ENCODE measurements at regions of chr19 and their contacts with region 1.

Region 1: GRCh38 chr19:4638828-4639530 is at the start of gene TNFAIP8L1:
- DNase-seq: peak; percentile 81 to 99
- H3K4me3 ChIP-seq: peak within 1 kb of the TSS; percentile 45 to 69 (median 58)
- H3K27ac ChIP-seq: peak within 1 kb of the TSS; percentile 35; the same call in 1 of the 2 replicates
- H3K4me1 ChIP-seq: peaks cover 0 to 10% (median 6%) of the 10 kb centered on the region in 4 experiments; a peak in 3 of 7 replicates
- H3K27me3 ChIP-seq: peaks cover 0 to 13% (median 10%) of the 10 kb centered on the region in 4 experiments; a peak in 5 of 7 replicates
- CTCF ChIP-seq: no peak
- EP300 ChIP-seq: no peak
- POLR2A ChIP-seq: peak in 1 of 2 experiments; percentile 56; a peak in 2 of 3 replicates
- RAD21 ChIP-seq: no peak
- total RNA-seq, gene TNFAIP8L1: 5.9 and 6.1 TPM in 2 replicates

Region 2: DNA sequence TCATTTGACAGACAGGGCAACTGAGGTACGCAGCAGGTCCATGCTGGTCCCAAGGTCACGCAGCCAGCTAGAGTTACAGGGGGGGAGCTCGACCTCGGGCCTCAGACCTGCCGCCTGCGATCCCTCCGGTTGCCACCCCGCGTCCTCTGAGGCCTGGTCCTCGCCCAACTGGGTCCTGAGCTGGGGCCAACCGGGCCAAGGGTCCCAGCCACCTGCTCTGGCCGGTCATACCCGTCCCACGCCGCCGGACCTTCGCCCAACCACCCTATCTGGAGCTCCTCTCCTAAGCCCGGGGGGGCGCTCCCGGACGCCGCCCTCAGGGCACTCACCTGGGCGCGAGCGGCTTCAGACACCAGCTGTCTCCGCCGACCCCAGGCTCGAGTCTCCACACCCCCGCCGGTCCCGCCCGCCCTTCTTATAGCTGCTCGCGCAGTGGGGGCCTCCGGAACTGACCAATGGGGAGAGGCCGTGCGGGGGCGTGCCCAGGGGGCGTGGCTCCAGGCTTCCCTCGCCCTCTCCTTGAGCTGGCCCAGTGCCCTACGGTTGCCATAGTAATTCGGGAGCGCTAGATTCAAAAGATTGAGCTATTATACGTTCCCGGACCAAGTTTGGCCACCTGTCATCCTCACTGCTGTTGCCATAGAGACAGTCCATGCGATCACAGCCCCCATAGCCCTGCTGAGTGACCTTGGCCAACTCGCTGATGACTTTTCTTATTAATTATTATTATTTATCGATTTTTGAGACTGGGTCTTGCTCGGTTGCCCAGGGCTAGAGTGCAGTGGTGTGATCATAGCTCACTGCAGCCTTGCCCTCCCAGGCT is 103.9 kb before region 1 on chr19 and contains the start of gene PLIN5:
- CTCF ChIA-PET with region 1: interaction called, 23 read pairs
- POLR2A ChIA-PET with region 1: interaction called, 8 read pairs
- DNase-seq: peak; percentile 54 to 99
- H3K4me3 ChIP-seq: peak within 1 kb of the TSS in 3 of 4 experiments; percentile 12 to 53 (median 16); a peak in 5 of 8 replicates
- H3K27ac ChIP-seq: no peak within 1 kb of the TSS
- H3K4me1 ChIP-seq: peaks cover 0 to 13% (median 5%) of the 10 kb centered on the region in 4 experiments; a peak in 5 of 7 replicates
- H3K27me3 ChIP-seq: peaks cover 0 to 19% (median 15%) of the 10 kb centered on the region in 4 experiments; a peak in 4 of 7 replicates
- CTCF ChIP-seq: peak in 2 of 3 experiments; percentile 0 to 8; a peak in 2 of 4 replicates
- EP300 ChIP-seq: no peak
- POLR2A ChIP-seq: peak in 1 of 2 experiments; percentile 86; a peak in 2 of 3 replicates
- RAD21 ChIP-seq: peak in 1 of 2 experiments; percentile 3; a peak in 1 of 4 replicates
- total RNA-seq, gene PLIN5: 1.8 and 2.0 TPM in 2 replicates

Region 3: GRCh38 chr19:4576016-4576933 is 62.7 kb before region 1 on chr19:
- CTCF ChIA-PET with region 1: interaction called, 316 read pairs
- POLR2A ChIA-PET with region 1: interaction called, 7 read pairs
- DNase-seq: peak in 1 of 2 experiments; percentile 96
- H3K4me3 ChIP-seq: 0 out of 8 replicates have a peak overlapping the region, but pooled peaks of 1 of the 4 experiments have one; percentile 36
- H3K27ac ChIP-seq: no peak overlapping the region
- H3K4me1 ChIP-seq: peaks cover 3 to 9% (median 7%) of the 10 kb centered on the region in 4 experiments
- H3K27me3 ChIP-seq: no peaks in the 10 kb centered on the region
- CTCF ChIP-seq: peak; percentile 79 to 94 (median 88)
- EP300 ChIP-seq: no peak
- POLR2A ChIP-seq: no peak
- RAD21 ChIP-seq: peak; percentile 55 to 66

Region 4: GRCh38 chr19:4589579-4590410 is 49.2 kb before region 1 on chr19:
- CTCF ChIA-PET with region 1: interaction called, 49 read pairs
- POLR2A ChIA-PET with region 1: interaction called, 3 read pairs
- DNase-seq: peak in 1 of 2 experiments; percentile 57
- H3K4me3 ChIP-seq: no peak overlapping the region
- H3K27ac ChIP-seq: no peak overlapping the region
- H3K4me1 ChIP-seq: no peaks in the 10 kb centered on the region; a peak in 1 of 7 replicates
- H3K27me3 ChIP-seq: peaks cover 0 to 6% (median 4%) of the 10 kb centered on the region in 4 experiments; a peak in 3 of 7 replicates
- CTCF ChIP-seq: peak; percentile 27 to 33 (median 31)
- EP300 ChIP-seq: no peak
- POLR2A ChIP-seq: no peak
- RAD21 ChIP-seq: peak; percentile 21 to 29; a peak in 2 of 4 replicates

Region 5: GRCh38 chr19:4606921-4607678 is 31.9 kb before region 1 on chr19:
- CTCF ChIA-PET with region 1: interaction called, 32 read pairs
- POLR2A ChIA-PET with region 1: interaction called, 4 read pairs
- DNase-seq: peak in 1 of 2 experiments; percentile 74
- H3K4me3 ChIP-seq: peak overlapping the region; percentile 3 to 47 (median 25); a peak in 5 of 8 replicates
- H3K27ac ChIP-seq: no peak overlapping the region
- H3K4me1 ChIP-seq: peaks cover 0 to 4% (median 2%) of the 10 kb centered on the region in 4 experiments; a peak in 4 of 7 replicates
- H3K27me3 ChIP-seq: peaks cover 0 to 2% (median 0%) of the 10 kb centered on the region in 4 experiments; a peak in 4 of 7 replicates
- CTCF ChIP-seq: peak; percentile 50 to 68 (median 62)
- EP300 ChIP-seq: no peak
- POLR2A ChIP-seq: no peak
- RAD21 ChIP-seq: peak; percentile 53 to 70

Region 6: DNA sequence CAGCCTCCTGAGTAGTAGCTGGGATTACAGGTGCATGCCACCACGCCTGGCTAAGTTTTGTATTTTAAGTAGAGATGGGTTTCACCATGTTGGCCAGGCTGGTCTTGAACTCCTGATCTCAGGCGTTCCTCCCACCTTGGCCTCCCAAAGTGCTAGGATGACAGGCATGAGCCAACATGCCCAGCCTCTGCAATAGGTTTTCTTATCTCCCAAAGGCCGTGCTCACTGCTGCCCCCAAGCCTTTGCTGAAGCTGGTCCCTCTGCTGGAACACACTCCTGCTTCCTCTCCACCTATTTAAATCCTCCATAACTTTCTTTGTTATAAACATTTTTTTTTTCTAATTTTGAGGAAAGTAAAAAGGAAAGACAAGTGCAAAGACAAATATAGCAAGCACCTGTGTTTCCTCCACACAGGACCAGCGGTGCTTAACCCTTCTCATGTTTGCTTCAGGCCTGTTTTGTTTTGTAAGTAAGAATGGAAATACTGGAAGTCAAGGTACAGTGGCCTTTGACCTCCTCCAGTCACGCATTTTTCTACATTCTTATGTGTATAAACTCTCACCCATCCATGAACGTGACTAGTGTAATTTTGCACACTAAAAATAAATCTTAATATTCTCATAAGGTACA is 14.1 kb before region 1 on chr19:
- CTCF ChIA-PET with region 1: interaction called, 54 read pairs
- POLR2A ChIA-PET with region 1: no interaction called
- DNase-seq: no peak
- H3K4me3 ChIP-seq: no peak overlapping the region
- H3K27ac ChIP-seq: no peak overlapping the region
- H3K4me1 ChIP-seq: no peaks in the 10 kb centered on the region; a peak in 2 of 7 replicates
- H3K27me3 ChIP-seq: no peaks in the 10 kb centered on the region
- CTCF ChIP-seq: peak; percentile 54 to 67 (median 65)
- EP300 ChIP-seq: no peak
- POLR2A ChIP-seq: no peak
- RAD21 ChIP-seq: peak; percentile 19 to 35; a peak in 2 of 4 replicates

Region 7: DNA sequence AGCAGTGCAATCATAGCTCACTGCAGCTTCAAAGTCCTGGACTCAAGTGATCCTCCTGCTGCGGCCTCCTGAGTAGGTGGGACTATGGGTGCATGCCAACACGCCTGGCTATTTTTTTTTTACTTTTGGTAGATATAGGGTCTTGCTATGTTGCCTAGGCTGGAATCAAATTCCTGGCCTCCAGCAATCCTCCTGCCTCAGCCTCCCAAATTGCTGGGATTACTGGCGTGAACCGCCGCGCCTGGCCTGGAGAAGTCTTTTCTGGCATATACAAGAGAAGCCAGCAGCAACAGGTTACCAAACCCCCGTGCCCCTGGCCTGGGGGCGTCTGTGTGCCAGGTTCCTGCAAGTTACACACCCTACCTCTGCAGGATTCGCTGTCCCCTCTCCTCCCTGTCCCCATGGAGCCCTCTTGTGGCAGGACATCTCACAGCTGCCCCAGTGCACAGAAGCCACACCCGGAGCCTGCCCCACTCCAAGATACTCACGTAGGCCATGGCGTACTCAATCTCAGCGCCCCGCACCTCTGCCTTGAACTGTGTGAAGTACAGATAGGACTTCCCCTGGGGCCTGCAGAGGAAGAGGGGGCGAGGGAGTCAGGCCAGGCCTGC is 21.3 kb after region 1 on chr19:
- CTCF ChIA-PET with region 1: interaction called, 12 read pairs
- POLR2A ChIA-PET with region 1: interaction called, 4 read pairs
- DNase-seq: peak in 1 of 2 experiments; percentile 67
- H3K4me3 ChIP-seq: no peak overlapping the region
- H3K27ac ChIP-seq: no peak overlapping the region
- H3K4me1 ChIP-seq: no peaks in the 10 kb centered on the region
- H3K27me3 ChIP-seq: no peaks in the 10 kb centered on the region
- CTCF ChIP-seq: peak; percentile 57 to 80 (median 68)
- EP300 ChIP-seq: no peak
- POLR2A ChIP-seq: no peak
- RAD21 ChIP-seq: peak; percentile 51 to 64

Region 8: DNA sequence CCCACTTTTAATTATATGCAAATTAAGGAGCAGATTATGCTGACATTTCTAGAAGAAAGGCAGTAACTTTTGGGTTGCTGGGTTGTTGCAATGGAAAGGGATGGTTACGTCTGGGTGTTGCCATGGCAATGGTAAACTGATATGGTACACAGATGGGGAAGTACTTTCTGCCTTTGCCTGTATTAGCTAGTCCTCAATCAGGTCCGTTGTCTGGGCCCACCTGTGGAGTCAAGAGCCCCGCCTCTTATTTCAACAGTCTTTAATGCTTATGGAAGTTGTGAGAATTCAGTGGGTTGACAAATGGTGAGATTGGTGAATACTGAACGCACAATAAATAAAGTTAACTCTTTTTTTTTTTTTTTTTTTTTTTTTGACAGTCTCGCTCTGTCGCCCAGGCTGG is 115.3 kb after region 1 on chr19:
- CTCF ChIA-PET with region 1: no interaction called
- POLR2A ChIA-PET with region 1: no interaction called
- DNase-seq: no peak
- H3K4me3 ChIP-seq: no peak overlapping the region
- H3K27ac ChIP-seq: no peak overlapping the region
- H3K4me1 ChIP-seq: peaks cover 0 to under 1% (median under 1%) of the 10 kb centered on the region in 4 experiments; a peak in 1 of 7 replicates
- H3K27me3 ChIP-seq: peaks cover 0 to 7% (median 4%) of the 10 kb centered on the region in 4 experiments; a peak in 4 of 7 replicates
- CTCF ChIP-seq: no peak
- EP300 ChIP-seq: no peak
- POLR2A ChIP-seq: no peak
- RAD21 ChIP-seq: no peak

Measured in H1 (cell line).